ENCODE measurements at regions of chr1 and their contacts with region 1.

Region 1: DNA sequence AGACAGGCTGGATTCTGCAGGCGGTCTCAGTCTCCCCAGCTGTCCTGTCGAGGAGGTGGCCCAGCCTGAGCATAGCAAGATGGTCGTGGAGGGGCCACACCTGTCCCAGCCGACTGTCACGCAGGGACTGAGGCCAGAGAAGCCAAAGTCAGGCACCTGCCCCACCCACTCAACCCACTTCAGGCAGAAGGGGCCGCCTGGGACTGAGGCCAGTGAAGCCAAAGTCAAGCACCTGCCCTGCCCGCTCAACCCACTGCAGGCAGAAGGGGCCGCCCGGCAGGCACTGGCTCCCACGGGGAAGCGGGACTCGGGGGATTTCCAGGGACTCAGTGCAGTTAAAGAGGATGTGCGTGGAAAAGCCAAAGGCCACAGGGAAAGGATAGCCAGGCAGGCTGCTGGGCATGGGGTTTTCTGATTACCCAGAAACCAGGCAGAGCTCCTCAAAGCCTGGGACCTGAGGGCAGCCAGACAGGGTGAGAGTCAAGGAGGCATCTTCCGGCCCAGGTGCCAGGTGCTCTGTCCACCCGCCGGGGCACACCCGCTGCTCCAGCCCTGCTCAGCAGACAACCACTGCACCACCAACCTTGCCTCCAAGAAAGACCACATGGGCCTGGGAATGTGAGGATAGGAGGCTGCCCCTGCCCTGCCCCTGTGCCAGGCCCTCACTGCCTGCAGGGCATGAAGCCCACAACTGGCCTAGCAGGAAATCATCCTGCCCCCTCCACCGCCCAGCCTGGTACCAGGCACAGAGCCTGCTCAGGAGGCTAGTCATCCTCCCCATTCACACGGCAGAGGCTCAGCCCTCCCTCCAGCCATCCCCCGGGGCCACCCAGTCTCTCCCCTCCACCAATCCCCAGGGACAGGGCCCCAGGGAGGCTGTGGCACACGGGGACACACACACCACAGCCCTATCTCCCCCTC is 41.0 kb downstream of the MEGF6 start:
- DNase-seq: no peak

Region 2: GRCh38 chr1:3501856-3502665 is 68.3 kb before region 1 on chr1:
- intact Hi-C with region 1: no loop called
- DNase-seq: peak in 6 of 10 donors; percentile 34 to 94 (median 74)

Region 3: GRCh38 chr1:3553166-3553939 is 17.0 kb before region 1 on chr1:
- intact Hi-C with region 1: no loop called
- DNase-seq: no peak

Region 4: GRCh38 chr1:3597599-3597964 is 27.3 kb after region 1 on chr1:
- intact Hi-C with region 1: loop called (anchors 2 kb)
- DNase-seq: no peak